ENCODE measurements at regions of chr6 and their contacts with region 1.

Region 1: GRCh38 chr6:131909408-131910218 is 41.6 kb downstream of the CCN2 start:
- DNase-seq: peak; percentile 68

Region 2: GRCh38 chr6:131694831-131695426 is 214.7 kb before region 1 on chr6:
- CTCF ChIA-PET with region 1: interaction called, 22 read pairs
- POLR2A ChIA-PET with region 1: no interaction called
- DNase-seq: peak; percentile 82

Region 3: DNA sequence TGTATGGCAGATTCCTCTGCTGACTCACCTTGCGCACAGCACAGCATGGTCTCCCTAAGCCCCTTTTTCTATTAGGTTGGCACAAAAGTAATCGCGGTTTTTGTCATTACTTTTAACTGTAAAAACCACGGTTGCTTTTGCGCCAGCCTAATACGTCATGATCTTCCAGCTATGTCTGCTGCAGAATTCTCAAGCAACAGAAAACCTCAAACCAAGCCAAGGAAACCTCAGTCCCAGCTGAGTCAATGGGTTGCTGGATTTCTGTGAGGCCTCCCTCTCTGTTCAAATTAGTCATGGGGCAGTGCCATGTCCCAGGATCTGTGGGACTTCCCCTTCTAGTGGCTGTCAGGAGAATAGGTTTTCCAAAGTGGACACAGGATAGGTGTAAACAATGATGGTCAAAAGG is 117.5 kb before region 1 on chr6:
- CTCF ChIA-PET with region 1: no interaction called
- POLR2A ChIA-PET with region 1: no interaction called
- DNase-seq: no peak

Region 4: GRCh38 chr6:131831886-131832285 is 77.7 kb before region 1 on chr6:
- CTCF ChIA-PET with region 1: no interaction called
- POLR2A ChIA-PET with region 1: no interaction called
- DNase-seq: no peak

Region 5: GRCh38 chr6:132651062-132651461 is 741.4 kb after region 1 on chr6:
- CTCF ChIA-PET with region 1: no interaction called
- POLR2A ChIA-PET with region 1: no interaction called
- DNase-seq: no peak